ENCODE measurements at regions of chr2 and their contacts with region 1.

Region 1: DNA sequence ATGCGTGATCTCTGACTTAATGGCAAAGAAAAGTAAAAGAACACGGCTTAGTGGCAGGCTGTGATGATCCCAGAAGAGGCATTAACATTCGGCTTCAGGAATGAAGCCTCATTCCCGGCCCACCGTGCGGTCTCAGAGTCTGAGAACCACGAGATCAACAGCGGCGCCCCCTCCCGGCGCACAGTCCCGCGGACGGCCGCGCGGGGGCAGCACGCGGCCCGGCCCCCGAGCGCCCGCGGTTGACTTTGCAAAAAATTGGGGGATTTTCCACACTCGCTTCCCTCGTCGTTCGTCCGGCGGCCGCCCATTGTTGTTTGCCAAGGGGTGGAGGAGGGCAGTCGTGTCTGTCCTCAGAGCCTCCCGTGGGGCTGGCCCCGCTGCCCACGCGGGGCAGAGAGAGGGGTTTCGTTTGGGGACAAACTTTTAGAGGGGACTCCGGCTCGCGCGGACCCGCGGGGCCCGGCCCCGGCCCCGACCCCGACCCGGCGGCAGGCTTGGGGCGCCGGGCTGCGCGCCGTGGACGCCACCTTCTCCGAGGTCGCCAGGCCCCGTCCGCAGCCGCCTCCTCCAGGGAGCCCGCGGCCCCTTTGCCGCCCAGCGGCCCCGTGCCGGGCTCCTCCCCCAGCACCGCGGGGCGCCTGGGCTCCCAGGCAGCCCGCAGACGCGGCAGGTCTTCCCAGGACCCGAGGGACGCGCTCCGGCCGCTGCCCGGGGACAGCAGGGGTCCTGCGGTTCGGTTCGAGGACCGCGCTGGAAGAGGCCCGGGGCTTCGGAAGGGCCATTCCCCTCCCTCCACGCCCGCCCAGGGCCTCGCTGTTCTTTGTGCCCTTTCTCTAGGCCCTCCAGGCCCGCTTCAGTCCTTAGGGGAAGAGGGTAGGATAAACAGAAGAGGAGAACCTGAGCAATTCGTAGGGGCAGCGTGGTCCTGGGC is 3.4 kb upstream of the HS6ST1 start:
- DNase-seq: peak; percentile 82 to 93 (median 88)
- H3K4me3 ChIP-seq: peak overlapping the region; percentile 63
- H3K27ac ChIP-seq: peak overlapping the region; percentile 53 to 83
- H3K4me1 ChIP-seq: no peaks in the 10 kb centered on the region
- H3K27me3 ChIP-seq: no peaks in the 10 kb centered on the region
- CTCF ChIP-seq: peak; percentile 92 to 94 (median 93)
- EP300 ChIP-seq: no peak
- POLR2A ChIP-seq: no peak

Region 2: DNA sequence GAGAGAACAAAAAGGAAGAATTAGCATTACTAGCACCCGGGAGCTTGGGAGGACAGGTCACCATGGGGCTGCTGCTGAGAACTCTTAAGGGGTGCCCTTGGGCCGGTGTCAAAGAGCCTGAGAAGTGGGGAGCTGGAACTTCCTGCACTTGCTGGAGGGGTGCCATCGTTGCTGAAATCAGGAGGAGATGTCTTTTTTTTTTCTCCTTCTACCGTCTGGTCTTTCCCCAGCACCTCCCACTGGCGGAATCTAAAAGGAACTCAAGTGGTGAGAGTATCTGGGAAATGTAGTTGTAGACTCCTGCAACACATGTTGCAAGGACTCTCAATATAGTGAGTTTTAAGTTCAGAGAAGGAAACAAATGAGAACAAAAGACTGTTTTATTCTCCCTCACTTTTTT is 430.2 kb before region 1 on chr2:
- intact Hi-C with region 1: loop called in 1 of 4 experiments (anchors 10 kb)
- DNase-seq: peak in 3 of 5 donors; percentile 22 to 51 (median 48)
- H3K4me3 ChIP-seq: no peak overlapping the region
- H3K27ac ChIP-seq: no peak overlapping the region
- H3K4me1 ChIP-seq: no peaks in the 10 kb centered on the region
- H3K27me3 ChIP-seq: no peaks in the 10 kb centered on the region
- CTCF ChIP-seq: no peak
- EP300 ChIP-seq: no peak
- POLR2A ChIP-seq: no peak

Region 3: DNA sequence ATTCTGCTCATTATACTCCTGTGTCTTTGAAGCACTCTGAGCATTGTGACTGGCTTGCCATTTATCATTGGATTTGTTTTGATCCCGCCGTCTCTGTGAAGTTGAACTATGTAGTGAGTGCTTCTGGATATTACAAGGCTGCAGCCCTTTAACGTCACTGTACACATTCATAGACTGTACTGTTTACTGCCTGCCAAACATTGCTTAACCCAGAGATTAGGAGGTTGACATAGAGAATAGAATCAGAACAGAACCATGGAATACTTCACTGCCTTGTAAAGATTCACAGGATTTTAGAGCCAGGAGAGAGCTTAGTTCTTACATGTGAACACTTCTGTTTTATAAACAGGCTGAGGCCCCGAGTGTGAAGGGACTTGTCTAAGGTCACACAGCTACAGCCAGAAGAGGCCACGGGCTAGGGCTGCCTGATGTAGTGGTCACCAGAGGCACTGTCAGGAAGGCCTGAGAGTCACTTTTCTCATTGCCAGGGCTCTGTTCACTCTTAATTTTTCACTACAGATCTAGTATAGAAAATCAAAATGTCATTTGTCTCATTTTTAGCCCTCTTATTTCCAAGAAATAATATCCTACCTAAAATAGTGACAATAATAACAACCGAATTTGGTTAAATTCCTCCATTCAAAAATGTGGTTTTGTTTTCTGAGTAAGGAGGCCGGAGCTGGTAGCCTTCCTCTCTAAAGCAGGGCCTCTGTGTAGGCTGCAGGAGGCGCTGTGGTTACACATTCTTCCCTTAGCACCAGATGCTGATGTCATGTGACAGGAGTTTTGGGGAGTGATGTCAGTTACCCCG is 143.2 kb before region 1 on chr2:
- intact Hi-C with region 1: loop called in 1 of 4 experiments (anchors 10 kb)
- DNase-seq: peak; percentile 38 to 72 (median 60)
- H3K4me3 ChIP-seq: no peak overlapping the region
- H3K27ac ChIP-seq: no peak overlapping the region
- H3K4me1 ChIP-seq: no peaks in the 10 kb centered on the region
- H3K27me3 ChIP-seq: no peaks in the 10 kb centered on the region
- CTCF ChIP-seq: peak; percentile 39 to 61 (median 40)
- EP300 ChIP-seq: no peak
- POLR2A ChIP-seq: no peak

Region 4: GRCh38 chr2:128395640-128396499 is 73.8 kb after region 1 on chr2:
- intact Hi-C with region 1: no loop called
- DNase-seq: no peak
- H3K4me3 ChIP-seq: no peak overlapping the region
- H3K27ac ChIP-seq: no peak overlapping the region
- H3K4me1 ChIP-seq: no peaks in the 10 kb centered on the region
- H3K27me3 ChIP-seq: no peaks in the 10 kb centered on the region
- CTCF ChIP-seq: no peak
- EP300 ChIP-seq: no peak
- POLR2A ChIP-seq: no peak

Region 5: GRCh38 chr2:128494640-128495321 is 172.7 kb after region 1 on chr2:
- intact Hi-C with region 1: loop called in 1 of 4 experiments (anchors 5 kb)
- DNase-seq: peak; percentile 64 to 78 (median 70)
- H3K4me3 ChIP-seq: no peak overlapping the region
- H3K27ac ChIP-seq: peak overlapping the region; percentile 2 to 19
- H3K4me1 ChIP-seq: peaks cover 9% of the 10 kb centered on the region
- H3K27me3 ChIP-seq: no peaks in the 10 kb centered on the region
- CTCF ChIP-seq: no peak
- EP300 ChIP-seq: no peak
- POLR2A ChIP-seq: no peak

Region 6: DNA sequence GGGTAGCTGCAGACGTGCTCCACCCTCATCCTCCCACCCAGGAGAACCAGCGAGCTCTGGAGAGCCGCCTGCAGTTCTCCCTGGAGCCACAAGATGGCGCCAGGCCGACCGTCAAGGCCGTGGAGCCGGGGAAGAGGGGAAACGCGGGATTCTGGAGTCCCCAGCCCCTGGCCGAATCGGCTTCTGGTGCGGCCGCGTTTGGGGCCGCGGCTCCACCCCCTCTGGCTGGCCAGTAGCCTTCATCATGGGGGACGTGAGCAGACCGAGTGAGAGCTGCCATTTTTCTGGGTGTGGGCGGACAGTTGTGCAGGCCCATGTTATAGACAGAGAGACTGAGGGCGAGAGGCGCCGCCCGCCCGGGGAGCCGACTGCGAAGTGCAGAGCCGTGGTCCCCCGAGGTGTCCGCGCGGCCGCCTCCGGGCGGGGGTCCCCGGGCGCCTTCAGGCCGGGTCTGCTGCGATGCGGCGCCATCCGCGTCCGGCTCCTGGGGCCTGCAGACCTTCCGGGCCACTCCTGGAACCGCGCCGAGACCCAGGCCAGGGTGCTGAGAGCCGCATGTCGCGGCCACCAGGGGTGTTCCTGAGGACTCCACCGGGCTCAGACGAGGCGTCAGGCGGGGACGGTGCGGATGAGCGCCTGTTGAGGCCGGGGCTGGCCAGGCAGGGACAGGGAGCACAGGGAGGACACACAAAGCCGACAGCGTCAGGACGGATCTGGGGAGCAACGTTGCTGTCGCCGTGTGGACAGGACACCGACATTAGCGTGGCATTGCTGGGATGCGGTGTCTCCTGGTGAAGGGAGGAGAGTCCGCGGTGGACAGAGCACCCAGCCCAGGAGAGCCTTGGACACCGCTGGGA is 414.9 kb after region 1 on chr2:
- intact Hi-C with region 1: loop called in 2 of 4 experiments (anchors 5 kb)
- DNase-seq: peak; percentile 81 to 90 (median 87)
- H3K4me3 ChIP-seq: no peak overlapping the region
- H3K27ac ChIP-seq: no peak overlapping the region
- H3K4me1 ChIP-seq: peaks cover 6% of the 10 kb centered on the region
- H3K27me3 ChIP-seq: no peaks in the 10 kb centered on the region
- CTCF ChIP-seq: peak; percentile 77 to 96 (median 89)
- EP300 ChIP-seq: no peak
- POLR2A ChIP-seq: no peak

Region 7: DNA sequence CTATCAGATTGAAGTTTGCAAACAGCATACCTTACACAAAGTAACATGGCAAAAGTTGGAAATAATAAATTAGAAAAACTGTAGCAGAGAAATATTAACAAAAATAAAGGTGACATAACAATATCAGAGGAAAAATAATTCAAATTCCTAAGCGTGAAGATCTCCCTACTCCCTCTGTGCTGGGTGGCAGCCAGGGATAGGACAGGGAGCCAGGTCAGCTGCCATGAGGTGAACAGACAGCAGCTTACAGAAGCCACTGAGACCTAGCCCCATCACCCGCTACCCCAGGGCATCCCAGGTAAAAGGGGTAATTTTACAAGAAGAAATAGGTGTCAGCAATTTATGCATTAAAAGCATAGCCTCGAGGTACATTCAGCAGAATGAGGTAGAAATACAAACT is 420.4 kb after region 1 on chr2:
- intact Hi-C with region 1: loop called in 2 of 4 experiments (anchors 5 kb)
- DNase-seq: no peak
- H3K4me3 ChIP-seq: no peak overlapping the region
- H3K27ac ChIP-seq: no peak overlapping the region
- H3K4me1 ChIP-seq: no peaks in the 10 kb centered on the region
- H3K27me3 ChIP-seq: no peaks in the 10 kb centered on the region
- CTCF ChIP-seq: no peak
- EP300 ChIP-seq: no peak
- POLR2A ChIP-seq: no peak

Region 8: GRCh38 chr2:128756365-128756717 is 434.3 kb after region 1 on chr2:
- intact Hi-C with region 1: loop called in 1 of 4 experiments (anchors 5 kb)
- DNase-seq: no peak
- H3K4me3 ChIP-seq: no peak overlapping the region
- H3K27ac ChIP-seq: no peak overlapping the region
- H3K4me1 ChIP-seq: peaks cover 4% of the 10 kb centered on the region
- H3K27me3 ChIP-seq: no peaks in the 10 kb centered on the region
- CTCF ChIP-seq: no peak
- EP300 ChIP-seq: no peak
- POLR2A ChIP-seq: no peak